Activated CD4-positive, alpha-beta T cell treated with anti-CD3 and anti-CD28 coated beads, Interleukin-2, amount 10 ng/mL, durations not matched to agents 24 days and 14 days (primary cell): ENCODE measurements at regions of chr14 and their contacts with region 1.

Region 1: DNA sequence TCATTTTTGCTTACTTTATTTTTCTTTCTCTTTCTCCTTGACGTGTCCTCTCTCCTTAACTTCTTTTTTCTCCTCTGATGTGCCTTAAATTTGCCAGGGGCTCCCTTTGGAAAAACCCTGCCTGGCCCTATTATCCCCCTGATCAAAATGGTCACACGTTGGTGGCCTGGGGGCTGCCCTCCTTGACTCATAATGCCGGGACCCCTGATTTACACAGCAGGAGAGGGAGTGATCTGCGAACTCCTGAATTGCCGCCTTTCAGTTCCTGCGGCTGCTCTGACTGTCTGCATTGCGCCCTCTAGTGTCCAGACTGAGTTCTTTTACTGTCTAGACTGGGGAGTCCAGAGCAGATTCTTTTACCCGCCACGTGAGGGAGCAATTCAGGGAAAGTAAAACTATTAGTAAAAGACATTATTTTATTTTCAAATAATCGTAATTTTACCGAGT is 44.8 kb upstream of the GZMB start:
- DNase-seq: peak; percentile 95
- H3K4me3 Mint-ChIP-seq: peak overlapping the region; percentile 87
- H3K27ac Mint-ChIP-seq: peak overlapping the region; percentile 91
- H3K4me1 Mint-ChIP-seq: peaks cover 60% of the 10 kb centered on the region
- H3K27me3 Mint-ChIP-seq: no peaks in the 10 kb centered on the region

Region 2: GRCh38 chr14:24259252-24259995 is 419.4 kb before region 1 on chr14:
- intact Hi-C with region 1: no loop called
- DNase-seq: no peak
- H3K4me3 Mint-ChIP-seq: no peak overlapping the region
- H3K27ac Mint-ChIP-seq: no peak overlapping the region
- H3K4me1 Mint-ChIP-seq: no peaks in the 10 kb centered on the region
- H3K27me3 Mint-ChIP-seq: no peaks in the 10 kb centered on the region

Region 3: GRCh38 chr14:24605435-24606190 is 73.2 kb before region 1 on chr14:
- intact Hi-C with region 1: loop called (anchors 1 kb)
- DNase-seq: peak; percentile 93
- H3K4me3 Mint-ChIP-seq: peak overlapping the region; percentile 78
- H3K27ac Mint-ChIP-seq: peak overlapping the region; percentile 91
- H3K4me1 Mint-ChIP-seq: peaks cover 56% of the 10 kb centered on the region
- H3K27me3 Mint-ChIP-seq: no peaks in the 10 kb centered on the region